Activated naive CD4-positive, alpha-beta T cell treated with anti-CD3 and anti-CD28 coated beads for 36 hours (primary cell): ENCODE measurements at regions of chr9 and their contacts with region 1.

Region 1: GRCh38 chr9:34010979-34011378 is 37.7 kb downstream of the UBAP2 start:
- DNase-seq: no peak
- H3K4me3 Mint-ChIP-seq: no peak overlapping the region
- H3K27ac Mint-ChIP-seq: no peak overlapping the region
- H3K4me1 Mint-ChIP-seq: no peaks in the 10 kb centered on the region
- H3K27me3 Mint-ChIP-seq: no peaks in the 10 kb centered on the region

Region 2: DNA sequence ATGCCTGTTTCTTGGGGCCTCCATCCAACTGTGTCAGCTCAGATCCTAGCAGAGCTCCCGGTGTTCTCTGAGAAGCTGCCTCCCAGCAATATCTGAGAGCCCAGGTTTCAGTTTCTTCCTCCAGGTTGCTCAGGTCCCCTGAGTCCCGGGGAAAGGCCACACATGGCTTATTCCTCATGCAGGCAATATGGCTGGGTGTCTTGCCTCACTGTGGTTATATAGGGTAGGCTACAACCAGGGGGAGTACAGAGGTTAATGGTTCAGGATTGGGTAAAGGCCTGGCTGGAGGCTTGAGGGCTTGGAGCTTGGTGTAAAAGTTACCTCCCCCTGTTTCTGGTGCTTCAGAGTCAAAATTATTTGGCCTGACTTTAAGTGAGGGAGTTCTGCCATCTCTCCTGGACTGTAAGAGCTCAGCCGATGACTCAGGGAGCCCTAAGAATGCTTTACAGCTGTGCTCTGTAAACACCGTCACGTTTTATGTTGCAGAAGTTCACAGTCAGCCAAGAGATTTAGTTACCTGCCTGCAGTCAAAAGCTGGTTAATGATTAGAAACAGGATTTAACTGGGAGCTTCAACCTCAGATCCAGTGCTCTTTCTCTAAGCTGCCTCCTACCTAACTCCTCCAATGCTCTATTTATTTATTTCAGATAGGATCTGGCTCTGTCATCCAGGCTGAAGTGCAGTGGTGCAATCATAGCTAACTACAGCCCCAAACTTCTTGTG is 62.0 kb after region 1 on chr9:
- CTCF ChIA-PET with region 1: interaction called, 9 read pairs
- intact Hi-C with region 1: loop called (anchors 1 kb)
- DNase-seq: no peak
- H3K4me3 Mint-ChIP-seq: no peak overlapping the region
- H3K27ac Mint-ChIP-seq: no peak overlapping the region
- H3K4me1 Mint-ChIP-seq: no peaks in the 10 kb centered on the region
- H3K27me3 Mint-ChIP-seq: no peaks in the 10 kb centered on the region